ENCODE measurements at regions of chr11 and their contacts with region 1.

Region 1: GRCh38 chr11:118928108-118928870 is 2.6 kb upstream of the BCL9L start:
- DNase-seq: peak; percentile 95

Region 2: DNA sequence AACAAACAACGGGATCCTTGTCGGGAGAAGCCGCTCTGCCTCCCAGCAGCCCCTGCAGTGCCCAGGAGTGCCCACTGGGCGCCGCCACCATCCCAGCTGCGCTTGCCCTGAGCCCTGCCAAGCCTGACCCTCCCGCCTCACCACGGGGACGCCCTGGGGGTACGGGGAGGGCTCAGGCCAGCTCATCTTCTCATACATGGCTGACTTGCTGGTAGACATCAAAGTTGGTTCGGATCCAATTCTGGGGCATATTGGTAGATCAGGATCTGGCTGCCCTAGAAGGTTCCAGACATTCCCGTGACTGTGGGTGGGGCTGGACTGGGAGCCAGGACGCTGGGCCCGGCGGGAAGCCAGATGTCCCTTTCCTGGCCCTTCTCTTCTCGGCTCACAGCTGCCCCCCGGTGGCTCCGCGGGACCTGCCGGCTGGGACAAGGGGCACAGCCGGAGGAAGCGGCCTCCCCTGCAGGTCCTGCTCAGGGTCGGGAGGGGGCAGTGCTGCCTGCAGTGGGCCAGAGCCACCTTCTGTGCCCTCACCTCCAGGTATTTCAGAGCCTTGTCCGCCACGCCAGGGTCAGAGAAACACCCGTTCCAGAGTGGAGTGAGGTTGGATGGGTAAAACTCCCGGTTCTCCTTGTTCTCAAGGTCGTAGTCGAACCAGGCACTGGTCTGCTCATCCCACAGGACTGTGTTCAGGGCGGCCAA is 238.3 kb before region 1 on chr11:
- intact Hi-C with region 1: loop called (anchors 1 kb)
- DNase-seq: peak; percentile 97

Region 3: GRCh38 chr11:118744046-118744445 is 184.2 kb before region 1 on chr11:
- intact Hi-C with region 1: no loop called
- DNase-seq: no peak

Region 4: DNA sequence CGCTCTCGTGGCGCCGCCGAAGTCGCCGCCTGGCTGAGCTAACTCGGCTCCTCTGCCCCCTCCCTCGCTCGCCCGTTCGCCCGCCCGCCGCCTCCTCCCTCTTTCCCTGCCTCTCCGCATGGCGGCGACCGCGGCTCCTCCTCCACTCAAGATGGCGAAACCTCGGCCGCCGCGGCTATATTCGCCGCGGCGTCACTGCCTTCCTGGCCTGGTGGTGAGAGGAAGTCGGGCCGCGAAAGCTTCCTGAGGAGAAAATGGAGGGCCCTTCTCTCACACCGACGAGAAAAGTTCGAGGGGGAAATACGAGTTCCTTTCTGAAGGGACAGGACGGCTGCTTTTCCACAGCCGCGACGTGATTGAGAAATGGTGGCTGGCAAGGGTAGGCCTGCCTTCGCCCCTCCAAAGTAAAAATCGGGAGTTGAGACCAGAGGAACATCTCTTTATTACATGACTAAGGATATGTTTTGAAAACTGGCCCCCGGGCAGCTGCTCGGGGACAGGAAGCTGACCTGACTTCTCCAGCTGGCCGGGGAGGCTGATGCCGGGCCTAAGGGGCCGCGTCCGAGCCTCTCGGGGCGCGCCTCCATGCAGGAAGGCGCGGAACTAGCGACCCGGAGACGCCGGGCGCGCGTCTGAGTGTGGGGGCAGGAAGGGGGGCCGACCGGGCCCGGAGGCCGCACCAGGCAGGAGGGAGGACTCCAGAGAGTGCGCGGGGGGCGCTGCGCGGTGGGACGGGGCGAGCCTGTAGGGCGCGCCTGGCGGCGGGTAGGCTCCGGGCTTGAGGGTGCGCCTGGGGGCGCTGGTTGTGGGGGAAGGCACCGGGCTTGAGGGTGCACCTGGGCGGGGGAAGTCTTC is 137.0 kb before region 1 on chr11 and contains the start of gene DDX6:
- intact Hi-C with region 1: loop called (anchors 1 kb)
- DNase-seq: peak; percentile 95
- total RNA-seq, gene DDX6: 118 TPM

Region 5: GRCh38 chr11:118907051-118908042 is 20.9 kb before region 1 on chr11:
- intact Hi-C with region 1: loop called (anchors 1 kb)
- DNase-seq: peak; percentile 95

Region 6: DNA sequence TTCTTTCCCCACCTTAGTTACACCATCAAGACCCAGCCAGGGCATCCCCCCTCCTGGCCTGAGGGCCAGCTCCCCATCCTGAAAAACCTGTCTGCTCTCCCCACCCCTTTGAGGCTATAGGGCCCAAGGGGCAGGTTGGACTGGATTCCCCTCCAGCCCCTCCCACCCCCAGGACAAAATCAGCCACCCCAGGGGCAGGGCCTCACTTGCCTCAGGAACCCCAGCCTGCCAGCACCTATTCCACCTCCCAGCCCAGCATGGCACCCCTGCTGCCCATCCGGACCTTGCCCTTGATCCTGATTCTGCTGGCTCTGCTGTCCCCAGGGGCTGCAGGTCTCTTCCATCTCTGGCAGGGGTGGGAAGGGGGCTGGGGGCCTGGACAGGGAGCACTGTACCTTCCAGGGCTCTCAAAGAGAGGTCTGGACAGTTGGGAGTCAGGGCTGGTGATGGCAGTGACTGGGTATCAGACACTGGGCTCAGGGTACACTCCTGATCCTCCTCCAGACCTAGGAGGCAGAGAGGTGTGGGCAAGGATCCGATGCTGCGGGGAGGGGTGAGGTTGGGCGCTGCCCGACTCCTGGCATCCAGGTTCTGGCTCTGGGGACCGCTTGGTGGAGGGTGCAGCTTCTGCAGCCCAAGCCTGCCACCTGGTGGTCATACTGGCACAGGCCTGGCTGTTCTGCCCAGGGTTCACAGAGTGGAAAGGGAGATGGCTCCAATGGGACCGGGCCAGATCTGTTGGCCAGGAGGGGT is 28.0 kb after region 1 on chr11 and contains the start of gene UPK2:
- intact Hi-C with region 1: loop called (anchors 2 kb)
- DNase-seq: peak; percentile 94
- total RNA-seq, gene UPK2: not detected

Region 7: DNA sequence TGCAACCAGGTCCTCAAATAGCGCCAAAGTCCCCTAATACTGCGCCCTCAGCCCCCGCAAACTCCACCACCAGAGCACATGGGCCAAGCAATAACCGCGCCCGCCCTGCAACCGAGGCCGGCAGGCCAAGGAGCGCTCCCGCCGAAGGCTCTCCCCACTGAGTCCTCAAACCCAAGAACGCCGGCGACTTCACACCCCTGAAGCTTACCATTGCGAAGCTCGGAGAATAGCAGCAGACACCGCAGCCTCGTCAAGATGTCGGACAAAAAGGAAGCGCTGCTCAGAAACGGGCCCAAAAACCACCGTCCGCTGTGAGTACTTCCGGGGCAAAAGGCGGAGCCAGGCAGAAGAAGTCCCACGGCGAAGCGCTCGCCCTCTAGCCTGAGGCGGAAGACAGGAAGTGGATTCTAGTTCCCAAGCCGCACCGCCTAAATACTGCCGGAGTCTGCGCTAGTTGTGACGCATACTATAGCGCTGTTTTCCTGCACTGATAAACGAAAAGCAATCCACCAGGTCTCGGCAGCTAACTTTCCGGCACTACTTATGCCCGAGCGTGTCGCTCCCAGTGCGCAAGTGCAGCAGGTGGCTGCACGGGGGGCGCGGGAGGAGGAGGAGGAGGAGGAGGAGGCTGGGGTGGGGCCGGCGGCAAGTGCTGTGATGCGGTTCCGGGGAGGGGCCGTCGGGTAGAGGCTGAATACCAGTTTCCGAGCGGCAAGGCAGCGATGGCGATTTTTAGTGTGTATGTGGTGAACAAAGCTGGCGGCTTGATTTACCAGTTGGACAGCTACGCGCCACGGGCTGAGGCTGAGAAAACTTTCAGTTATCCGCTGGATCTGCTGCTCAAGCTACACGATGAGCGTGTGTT is 90.0 kb after region 1 on chr11 and contains the starts of genes RPS25 and TRAPPC4:
- intact Hi-C with region 1: no loop called
- DNase-seq: peak; percentile 98
- total RNA-seq, gene RPS25: 572 TPM
- total RNA-seq, gene TRAPPC4: 42.4 TPM

Region 8: GRCh38 chr11:119067371-119068222 is 139.3 kb after region 1 on chr11 and contains the start of gene VPS11:
- intact Hi-C with region 1: no loop called
- DNase-seq: peak; percentile 99
- total RNA-seq, gene VPS11: 18.5 TPM